ENCODE measurements at regions of chr14 and their contacts with region 1.

Region 1: DNA sequence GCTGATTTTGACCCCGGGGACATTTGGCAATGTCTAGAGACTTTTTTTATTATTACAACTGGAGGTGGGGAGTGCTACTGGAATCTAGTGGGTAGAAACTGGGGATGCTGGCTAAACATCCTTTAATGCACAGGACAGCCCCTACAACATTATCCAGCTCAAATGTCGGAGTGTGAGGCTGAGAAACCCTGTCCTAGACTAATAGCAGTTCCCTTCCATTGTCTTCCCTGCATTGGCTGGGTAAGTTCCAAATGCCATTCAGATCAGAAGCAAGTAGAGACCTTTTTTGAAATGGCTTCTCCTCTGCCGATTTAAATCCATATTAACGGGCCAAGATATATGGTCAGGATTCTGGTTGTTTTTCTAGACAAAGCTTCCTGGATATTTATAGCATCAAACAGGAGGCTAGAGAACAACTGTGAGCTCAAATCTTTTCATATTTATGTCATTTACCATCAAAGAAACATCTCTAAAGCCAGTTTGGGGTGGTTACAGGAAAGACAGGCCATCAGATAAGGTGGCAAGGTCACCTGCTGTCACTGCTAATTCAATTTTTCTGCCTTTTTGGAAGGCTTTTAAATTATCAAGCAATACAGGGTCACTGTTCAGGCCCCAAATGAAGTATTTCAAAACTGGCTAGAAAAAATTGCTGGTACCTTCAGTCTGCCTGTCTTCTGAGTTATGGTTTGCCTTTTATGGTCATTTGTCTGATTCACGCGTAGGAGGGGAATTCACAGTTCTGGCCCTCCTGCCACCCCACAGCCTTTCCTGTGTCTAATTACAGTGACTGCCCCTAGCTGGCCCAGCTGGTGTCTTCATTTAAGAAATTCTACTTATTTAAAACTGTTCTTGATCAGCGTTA is 20.1 kb upstream of the AKAP5 start:
- DNase-seq: peak; percentile 43
- H3K4me3 Mint-ChIP-seq: peak overlapping the region; percentile 68
- H3K27ac Mint-ChIP-seq: peak overlapping the region; percentile 87
- H3K4me1 Mint-ChIP-seq: peaks cover 28% of the 10 kb centered on the region
- H3K27me3 Mint-ChIP-seq: no peaks in the 10 kb centered on the region

Region 2: GRCh38 chr14:64465191-64465822 is 20.1 kb after region 1 on chr14 and contains the start of gene AKAP5:
- intact Hi-C with region 1: loop called (anchors 2 kb)
- DNase-seq: peak; percentile 62
- H3K4me3 Mint-ChIP-seq: peak within 1 kb of the TSS; percentile 88
- H3K27ac Mint-ChIP-seq: peak within 1 kb of the TSS; percentile 88
- H3K4me1 Mint-ChIP-seq: peaks cover 35% of the 10 kb centered on the region
- H3K27me3 Mint-ChIP-seq: peaks cover 6% of the 10 kb centered on the region
- total RNA-seq, gene AKAP5: 1.1 and 1.5 TPM in 2 replicates

Region 3: GRCh38 chr14:64549781-64550620 is 104.8 kb after region 1 on chr14 and contains the start of gene PPP1R36:
- intact Hi-C with region 1: no loop called
- DNase-seq: peak; percentile 22
- H3K4me3 Mint-ChIP-seq: peak within 1 kb of the TSS; percentile 55
- H3K27ac Mint-ChIP-seq: peak within 1 kb of the TSS; percentile 51
- H3K4me1 Mint-ChIP-seq: peaks cover 16% of the 10 kb centered on the region
- H3K27me3 Mint-ChIP-seq: peaks cover 51% of the 10 kb centered on the region
- total RNA-seq, gene PPP1R36: not detected in 2 replicates

Region 4: DNA sequence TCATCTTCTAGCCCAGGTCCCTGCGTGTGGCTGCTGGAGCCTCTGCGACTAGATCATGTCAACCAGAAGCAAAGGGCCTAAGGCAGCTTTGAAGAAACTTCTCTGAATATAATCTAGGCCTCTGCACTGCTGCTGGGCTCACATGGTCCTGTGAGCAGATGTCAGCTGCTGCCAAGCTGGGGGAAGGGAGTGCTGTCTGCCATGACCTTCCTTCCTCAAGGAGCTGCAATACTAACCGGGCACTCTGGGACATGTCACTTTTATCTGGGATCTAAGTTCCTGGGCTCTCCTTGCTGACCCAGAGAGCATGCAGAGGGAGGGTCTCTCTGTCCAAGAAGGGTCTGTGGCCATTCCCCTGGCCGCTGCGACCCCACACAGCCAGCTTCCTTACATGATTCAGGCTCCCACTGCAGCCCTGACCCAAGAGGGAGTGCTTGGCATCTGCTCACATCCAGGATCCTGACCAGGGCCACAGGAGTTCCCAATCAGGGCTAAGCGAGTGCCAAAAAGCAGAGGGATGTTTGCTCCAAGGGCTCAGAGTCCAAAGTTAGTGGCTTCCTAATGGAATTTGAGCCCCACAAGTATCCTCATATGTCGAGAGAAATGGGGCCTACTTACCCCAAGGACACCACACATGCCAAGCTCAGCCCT is 333.0 kb after region 1 on chr14:
- intact Hi-C with region 1: no loop called
- DNase-seq: no peak
- H3K4me3 Mint-ChIP-seq: no peak overlapping the region
- H3K27ac Mint-ChIP-seq: no peak overlapping the region
- H3K4me1 Mint-ChIP-seq: no peaks in the 10 kb centered on the region
- H3K27me3 Mint-ChIP-seq: peaks cover 2% of the 10 kb centered on the region

Measured in activated T-helper 1 cell treated with anti-CD3 and anti-CD28 coated beads, Interleukin-12 subunit alpha, Interleukin-12 subunit beta, Interleukin-2, Interleukin-4 antibody, amounts not matched to agents 30 ng/mL and 10 ng/mL and 1 ng/mL, durations not matched to agents 14 hours and 24 hours and 36 hours (primary cell).